ENCODE measurements at regions of chr3 and their contacts with region 1.

Region 1: GRCh38 chr3:30606301-30607031 is at the start of gene TGFBR2:
- DNase-seq: peak; percentile 94
- ATAC-seq: peak; percentile 70
- H3K4me3 Mint-ChIP-seq: peak within 1 kb of the TSS; percentile 99
- H3K27ac Mint-ChIP-seq: peak within 1 kb of the TSS; percentile 95
- H3K4me1 Mint-ChIP-seq: peaks cover 60% of the 10 kb centered on the region
- H3K27me3 Mint-ChIP-seq: no peaks in the 10 kb centered on the region
- total RNA-seq, gene TGFBR2: 45.5 to 46.6 TPM

Region 2: DNA sequence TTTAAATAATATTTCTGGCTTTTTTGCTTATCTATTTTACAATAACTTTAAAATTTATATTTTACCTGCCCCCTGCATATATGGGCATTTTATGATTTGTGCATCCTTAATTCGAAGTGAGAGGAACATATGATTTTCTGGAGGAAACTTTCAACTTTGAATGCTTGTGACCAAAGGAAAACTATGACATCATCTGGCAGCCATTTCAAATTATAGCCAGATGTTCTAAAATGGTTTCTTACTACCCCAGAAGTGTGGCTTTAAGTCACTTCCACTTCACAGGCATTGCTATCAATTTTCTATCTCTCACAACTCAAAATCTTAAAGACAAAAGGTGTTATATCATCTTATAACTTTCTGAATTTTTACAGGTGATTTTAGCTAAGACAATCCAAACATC is 816.8 kb before region 1 on chr3:
- CTCF ChIA-PET with region 1: no interaction called
- POLR2A ChIA-PET with region 1: no interaction called
- intact Hi-C with region 1: no loop called
- DNase-seq: no peak
- ATAC-seq: no peak
- H3K4me3 Mint-ChIP-seq: no peak overlapping the region
- H3K27ac Mint-ChIP-seq: no peak overlapping the region
- H3K4me1 Mint-ChIP-seq: no peaks in the 10 kb centered on the region
- H3K27me3 Mint-ChIP-seq: no peaks in the 10 kb centered on the region

Region 3: GRCh38 chr3:30353711-30354467 is 252.6 kb before region 1 on chr3:
- CTCF ChIA-PET with region 1: no interaction called
- POLR2A ChIA-PET with region 1: no interaction called
- intact Hi-C with region 1: loop called (anchors 2 to 5 kb)
- DNase-seq: peak; percentile 63
- ATAC-seq: peak; percentile 97
- H3K4me3 Mint-ChIP-seq: no peak overlapping the region
- H3K27ac Mint-ChIP-seq: no peak overlapping the region
- H3K4me1 Mint-ChIP-seq: peaks cover 73% of the 10 kb centered on the region
- H3K27me3 Mint-ChIP-seq: peaks cover 8% of the 10 kb centered on the region

Region 4: GRCh38 chr3:30502742-30503073 is 103.8 kb before region 1 on chr3:
- CTCF ChIA-PET with region 1: no interaction called
- POLR2A ChIA-PET with region 1: no interaction called
- intact Hi-C with region 1: loop called in 1 of 2 experiments (anchors 5 kb)
- DNase-seq: no peak
- ATAC-seq: peak; percentile 66
- H3K4me3 Mint-ChIP-seq: no peak overlapping the region
- H3K27ac Mint-ChIP-seq: peak overlapping the region; percentile 68
- H3K4me1 Mint-ChIP-seq: peaks cover 37% of the 10 kb centered on the region
- H3K27me3 Mint-ChIP-seq: no peaks in the 10 kb centered on the region

Region 5: GRCh38 chr3:30623351-30623750 is 16.9 kb after region 1 on chr3:
- CTCF ChIA-PET with region 1: interaction called, 5 read pairs
- POLR2A ChIA-PET with region 1: interaction called, 16 read pairs
- intact Hi-C with region 1: loop called in 1 of 2 experiments (anchors 1 kb)
- DNase-seq: no peak
- ATAC-seq: peak; percentile 20
- H3K4me3 Mint-ChIP-seq: peak overlapping the region; percentile 17
- H3K27ac Mint-ChIP-seq: peak overlapping the region; percentile 83
- H3K4me1 Mint-ChIP-seq: peaks cover 96% of the 10 kb centered on the region
- H3K27me3 Mint-ChIP-seq: no peaks in the 10 kb centered on the region

Region 6: GRCh38 chr3:30693470-30694120 is 87.1 kb after region 1 on chr3:
- CTCF ChIA-PET with region 1: interaction called, 8 read pairs
- POLR2A ChIA-PET with region 1: no interaction called
- intact Hi-C with region 1: loop called in 1 of 2 experiments (anchors 2 kb)
- DNase-seq: peak; percentile 53
- ATAC-seq: peak; percentile 81
- H3K4me3 Mint-ChIP-seq: no peak overlapping the region
- H3K27ac Mint-ChIP-seq: peak overlapping the region; percentile 67
- H3K4me1 Mint-ChIP-seq: peaks cover 61% of the 10 kb centered on the region
- H3K27me3 Mint-ChIP-seq: no peaks in the 10 kb centered on the region

Region 7: DNA sequence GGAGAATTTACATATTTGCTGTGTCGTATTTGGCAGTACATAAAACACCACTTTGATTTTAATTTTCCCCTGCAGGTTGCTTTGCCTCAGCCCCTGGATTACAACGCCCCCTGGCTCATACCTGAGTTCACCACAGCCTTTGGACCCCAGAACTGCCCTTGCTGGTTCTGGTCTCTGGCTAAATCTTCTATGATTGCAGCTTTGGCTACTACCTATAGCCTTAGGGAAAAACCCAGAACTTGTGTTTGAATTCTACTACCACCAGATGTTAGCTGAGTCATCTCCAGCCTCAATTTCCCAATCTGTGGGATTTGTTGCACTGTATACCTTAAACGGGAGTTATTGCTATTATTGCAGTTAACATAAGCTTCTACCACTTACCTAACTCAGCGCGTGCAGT is 603.7 kb after region 1 on chr3:
- CTCF ChIA-PET with region 1: no interaction called
- POLR2A ChIA-PET with region 1: no interaction called
- intact Hi-C with region 1: no loop called
- DNase-seq: no peak
- ATAC-seq: no peak
- H3K4me3 Mint-ChIP-seq: no peak overlapping the region
- H3K27ac Mint-ChIP-seq: no peak overlapping the region
- H3K4me1 Mint-ChIP-seq: peaks cover 54% of the 10 kb centered on the region
- H3K27me3 Mint-ChIP-seq: no peaks in the 10 kb centered on the region